T-cell (primary cell): ENCODE measurements at regions of chr15 and their contacts with region 1.

Region 1: DNA sequence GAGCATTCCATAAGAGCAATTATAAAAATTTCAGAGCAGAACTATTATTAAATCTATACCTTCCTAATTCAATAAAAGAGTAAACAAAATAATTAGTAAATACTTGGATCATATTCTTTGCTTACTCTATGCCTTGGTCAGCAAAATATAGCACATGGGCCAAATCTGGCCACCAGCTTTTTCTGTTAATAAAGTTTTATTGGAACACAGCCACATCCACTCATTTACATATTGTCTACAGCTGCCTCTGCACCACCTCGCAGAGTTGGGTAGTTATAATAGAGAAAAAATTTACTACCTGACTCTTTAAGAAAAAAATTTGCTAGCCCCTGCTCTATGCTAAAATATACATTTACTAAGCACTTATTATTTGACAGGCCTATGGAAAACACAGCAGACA is 32.2 kb upstream of the GANC start:
- DNase-seq: no peak
- ATAC-seq: no peak
- H3K4me3 ChIP-seq: no peak overlapping the region
- H3K4me3 Mint-ChIP-seq: no peak overlapping the region
- H3K27ac ChIP-seq: no peak overlapping the region
- H3K27ac Mint-ChIP-seq: no peak overlapping the region
- H3K4me1 ChIP-seq: no peaks in the 10 kb centered on the region
- H3K4me1 Mint-ChIP-seq: peaks cover 12 to 14% (median 13%) of the 10 kb centered on the region in 3 donors
- H3K27me3 ChIP-seq: no peaks in the 10 kb centered on the region
- H3K27me3 Mint-ChIP-seq: no peaks in the 10 kb centered on the region

Region 2: GRCh38 chr15:41806291-41807181 is 434.3 kb before region 1 on chr15:
- CTCF ChIA-PET with region 1: interaction called in 1 of 2 experiments, 13 read pairs
- POLR2A ChIA-PET with region 1: no interaction called
- DNase-seq: no peak
- ATAC-seq: no peak
- H3K4me3 ChIP-seq: no peak overlapping the region
- H3K4me3 Mint-ChIP-seq: no peak overlapping the region
- H3K27ac ChIP-seq: no peak overlapping the region
- H3K27ac Mint-ChIP-seq: no peak overlapping the region
- H3K4me1 ChIP-seq: peaks cover 9 to 17% of the 10 kb centered on the region in 2 experiments
- H3K4me1 Mint-ChIP-seq: peaks cover 21 to 23% (median 22%) of the 10 kb centered on the region in 3 donors
- H3K27me3 ChIP-seq: no peaks in the 10 kb centered on the region
- H3K27me3 Mint-ChIP-seq: no peaks in the 10 kb centered on the region

Region 3: DNA sequence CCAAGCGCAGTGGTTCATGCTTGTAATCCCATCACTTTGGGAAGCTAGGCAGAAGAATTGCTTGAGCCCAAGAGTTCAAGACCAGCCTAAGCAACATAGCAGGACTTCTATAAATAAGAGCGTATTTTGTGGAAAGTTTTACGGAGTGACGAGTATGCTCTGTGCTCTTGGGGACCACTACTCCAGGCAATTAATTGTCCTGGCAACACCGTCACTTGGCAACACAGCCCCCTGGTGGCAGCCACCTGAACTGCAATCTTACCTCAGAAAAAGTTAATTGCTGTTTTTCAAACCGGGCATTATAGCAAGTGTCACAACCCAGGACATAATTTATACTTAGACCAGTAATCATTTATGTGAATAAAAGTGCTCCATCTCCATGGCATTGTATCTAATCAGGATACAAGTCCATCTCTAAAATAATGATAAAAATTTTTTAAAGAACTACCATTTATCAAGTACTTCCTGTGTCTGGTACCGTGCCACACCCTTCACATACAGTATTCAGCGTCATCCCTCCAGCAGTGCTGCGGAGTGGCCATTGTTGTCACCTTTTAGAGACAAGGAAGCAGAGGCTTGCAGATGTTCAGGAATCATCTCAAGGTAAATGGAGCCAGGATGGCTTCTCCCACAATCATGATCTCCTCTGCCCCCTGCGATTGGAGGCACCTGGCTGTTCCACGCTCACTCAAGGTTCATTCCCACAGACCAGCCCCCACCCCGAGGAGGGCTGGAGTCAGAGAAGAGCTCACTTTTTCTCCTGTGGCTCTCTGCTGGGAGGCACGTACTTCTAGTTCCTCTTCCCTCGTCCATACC is 180.9 kb before region 1 on chr15:
- CTCF ChIA-PET with region 1: no interaction called
- POLR2A ChIA-PET with region 1: no interaction called
- DNase-seq: peak in 33 of 35 experiments; percentile 12 to 79 (median 60)
- ATAC-seq: peak in 3 of 4 experiments; percentile 47 to 58 (median 58)
- H3K4me3 ChIP-seq: no peak overlapping the region
- H3K4me3 Mint-ChIP-seq: no peak overlapping the region
- H3K27ac ChIP-seq: no peak overlapping the region
- H3K27ac Mint-ChIP-seq: no peak overlapping the region
- H3K4me1 ChIP-seq: peaks cover 0 to 11% of the 10 kb centered on the region in 2 experiments
- H3K4me1 Mint-ChIP-seq: peaks cover 13 to 21% (median 17%) of the 10 kb centered on the region in 3 donors
- H3K27me3 ChIP-seq: peaks cover 0 to 45% of the 10 kb centered on the region in 2 experiments
- H3K27me3 Mint-ChIP-seq: peaks cover 25 to 41% of the 10 kb centered on the region in 2 donors

Region 4: DNA sequence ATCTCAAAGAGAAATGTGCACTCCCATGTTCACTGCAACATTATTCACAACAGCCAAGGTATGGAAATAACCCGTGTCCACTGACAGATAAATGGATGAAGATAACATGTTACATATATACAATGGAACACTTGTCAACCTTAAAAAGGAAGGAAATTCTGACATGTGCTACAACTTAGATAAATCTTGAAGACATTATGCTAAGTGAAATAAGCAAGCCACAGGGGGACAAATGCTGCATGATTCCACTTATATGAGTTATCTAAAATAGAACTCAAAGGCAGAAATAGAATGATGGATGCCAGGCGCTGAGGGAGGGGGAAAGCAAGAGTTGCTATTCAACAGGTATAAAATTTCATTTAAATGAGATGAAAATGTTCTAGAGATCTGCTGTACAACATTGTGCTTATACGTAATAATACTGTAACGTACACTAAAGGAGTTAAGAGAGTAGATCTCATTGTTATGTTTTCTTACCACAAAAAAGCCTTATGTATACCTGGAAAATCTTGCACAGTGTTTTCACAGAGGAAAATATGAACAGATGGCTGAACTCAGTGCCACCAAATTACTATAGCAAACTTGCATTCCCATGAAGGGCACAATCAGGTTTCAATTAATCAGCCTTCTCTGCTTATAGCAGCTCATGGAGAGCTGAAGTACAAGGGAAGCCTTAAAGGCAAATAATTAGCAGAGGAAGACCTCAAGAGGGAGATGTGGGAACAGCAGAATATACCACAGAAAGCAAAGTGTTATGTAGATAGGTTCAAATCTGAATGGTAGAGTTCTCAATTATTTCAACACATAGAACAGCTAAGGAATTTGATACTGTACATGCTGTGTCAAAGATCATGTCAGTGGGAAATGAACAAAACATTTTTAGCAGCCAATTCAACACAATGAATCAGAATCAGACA is 24.6 kb before region 1 on chr15:
- CTCF ChIA-PET with region 1: no interaction called
- POLR2A ChIA-PET with region 1: no interaction called
- DNase-seq: no peak
- ATAC-seq: no peak
- H3K4me3 ChIP-seq: no peak overlapping the region
- H3K4me3 Mint-ChIP-seq: no peak overlapping the region
- H3K27ac ChIP-seq: no peak overlapping the region
- H3K27ac Mint-ChIP-seq: peak overlapping the region; percentile 7 to 29
- H3K4me1 ChIP-seq: no peaks in the 10 kb centered on the region
- H3K4me1 Mint-ChIP-seq: peaks cover 0 to 5% (median 0%) of the 10 kb centered on the region in 3 donors
- H3K27me3 ChIP-seq: no peaks in the 10 kb centered on the region
- H3K27me3 Mint-ChIP-seq: no peaks in the 10 kb centered on the region

Region 5: GRCh38 chr15:42253300-42253699 is 12.5 kb after region 1 on chr15:
- CTCF ChIA-PET with region 1: no interaction called
- POLR2A ChIA-PET with region 1: no interaction called
- DNase-seq: no peak
- ATAC-seq: no peak
- H3K4me3 ChIP-seq: no peak overlapping the region
- H3K4me3 Mint-ChIP-seq: no peak overlapping the region
- H3K27ac ChIP-seq: no peak overlapping the region
- H3K27ac Mint-ChIP-seq: no peak overlapping the region
- H3K4me1 ChIP-seq: no peaks in the 10 kb centered on the region
- H3K4me1 Mint-ChIP-seq: peaks cover 10 to 14% (median 10%) of the 10 kb centered on the region in 3 donors
- H3K27me3 ChIP-seq: no peaks in the 10 kb centered on the region
- H3K27me3 Mint-ChIP-seq: no peaks in the 10 kb centered on the region